ENCODE measurements at regions of chr11 and their contacts with region 1.

Region 1: DNA sequence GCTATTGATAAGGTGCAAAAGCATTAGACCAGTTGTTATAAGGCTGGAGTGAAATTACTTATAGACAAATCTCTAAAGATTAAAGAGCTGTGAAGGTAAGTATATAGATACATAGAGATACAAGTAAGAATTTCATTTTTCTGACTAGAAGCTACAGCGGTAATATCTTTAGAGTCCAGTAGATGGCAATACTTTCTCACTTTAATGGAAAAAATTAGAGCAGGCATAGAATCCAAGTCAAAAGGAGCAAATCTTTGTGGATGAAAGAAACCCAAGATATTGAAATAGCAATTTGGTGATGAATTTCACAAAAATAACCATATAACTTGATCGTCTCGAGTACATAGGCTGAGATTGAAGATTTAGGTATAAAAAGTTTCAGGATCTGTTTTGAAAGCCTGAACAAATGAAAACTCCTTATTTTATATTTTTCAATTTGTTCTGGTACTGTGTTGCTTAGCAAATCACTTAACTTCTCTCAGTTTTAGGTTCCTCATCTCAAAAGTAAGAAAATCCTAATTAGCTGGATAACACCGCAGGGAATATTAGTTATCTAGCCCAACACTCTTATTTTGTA is 81.9 kb downstream of the UVRAG start:
- DNase-seq: peak in 3 of 14 experiments; percentile 44 to 51 (median 44)
- ATAC-seq: no peak
- H3K4me3 ChIP-seq: no peak overlapping the region
- H3K4me3 Mint-ChIP-seq: no peak overlapping the region
- H3K27ac ChIP-seq: no peak overlapping the region
- H3K27ac Mint-ChIP-seq: no peak overlapping the region
- H3K4me1 ChIP-seq: no peaks in the 10 kb centered on the region
- H3K4me1 Mint-ChIP-seq: peaks cover 5% of the 10 kb centered on the region
- H3K27me3 ChIP-seq: no peaks in the 10 kb centered on the region
- H3K27me3 Mint-ChIP-seq: no peaks in the 10 kb centered on the region
- CTCF ChIP-seq: peak; percentile 59

Region 2: GRCh38 chr11:76152086-76152681 is 255.3 kb after region 1 on chr11:
- CTCF ChIA-PET with region 1: interaction called, 18 read pairs
- POLR2A ChIA-PET with region 1: no interaction called
- intact Hi-C with region 1: loop called (anchors 1 kb)
- DNase-seq: peak; percentile 64 to 87 (median 76)
- ATAC-seq: peak; percentile 91
- H3K4me3 ChIP-seq: peak overlapping the region; percentile 44
- H3K4me3 Mint-ChIP-seq: peak overlapping the region; percentile 44
- H3K27ac ChIP-seq: no peak overlapping the region
- H3K27ac Mint-ChIP-seq: no peak overlapping the region
- H3K4me1 ChIP-seq: peaks cover 21% of the 10 kb centered on the region
- H3K4me1 Mint-ChIP-seq: peaks cover 23% of the 10 kb centered on the region
- H3K27me3 ChIP-seq: no peaks in the 10 kb centered on the region
- H3K27me3 Mint-ChIP-seq: no peaks in the 10 kb centered on the region
- CTCF ChIP-seq: peak; percentile 91

Region 3: GRCh38 chr11:76318744-76319384 is 421.9 kb after region 1 on chr11:
- CTCF ChIA-PET with region 1: interaction called, 3 read pairs
- POLR2A ChIA-PET with region 1: no interaction called
- intact Hi-C with region 1: loop called (anchors 1 to 2 kb)
- DNase-seq: peak; percentile 78 to 94 (median 84)
- ATAC-seq: peak; percentile 97
- H3K4me3 ChIP-seq: no peak overlapping the region
- H3K4me3 Mint-ChIP-seq: no peak overlapping the region
- H3K27ac ChIP-seq: no peak overlapping the region
- H3K27ac Mint-ChIP-seq: no peak overlapping the region
- H3K4me1 ChIP-seq: peaks cover 7% of the 10 kb centered on the region
- H3K4me1 Mint-ChIP-seq: no peaks in the 10 kb centered on the region
- H3K27me3 ChIP-seq: peaks cover 21% of the 10 kb centered on the region in 2 experiments
- H3K27me3 Mint-ChIP-seq: peaks cover 42% of the 10 kb centered on the region
- CTCF ChIP-seq: peak; percentile 84

Region 4: GRCh38 chr11:76680518-76681425 is 783.8 kb after region 1 on chr11:
- CTCF ChIA-PET with region 1: no interaction called
- POLR2A ChIA-PET with region 1: no interaction called
- intact Hi-C with region 1: loop called in 1 of 2 experiments (anchors 5 kb)
- DNase-seq: peak; percentile 23 to 73 (median 40)
- ATAC-seq: peak; percentile 52
- H3K4me3 ChIP-seq: no peak overlapping the region
- H3K4me3 Mint-ChIP-seq: no peak overlapping the region
- H3K27ac ChIP-seq: no peak overlapping the region
- H3K27ac Mint-ChIP-seq: no peak overlapping the region
- H3K4me1 ChIP-seq: peaks cover 8% of the 10 kb centered on the region
- H3K4me1 Mint-ChIP-seq: no peaks in the 10 kb centered on the region
- H3K27me3 ChIP-seq: no peaks in the 10 kb centered on the region
- H3K27me3 Mint-ChIP-seq: peaks cover 5% of the 10 kb centered on the region
- CTCF ChIP-seq: peak; percentile 58